ENCODE measurements at regions of chrX and their contacts with region 1.

Region 1: GRCh38 chrX:153953342-153953830 is 8.9 kb upstream of the RENBP start:
- DNase-seq: peak; percentile 95
- H3K4me3 ChIP-seq: no peak overlapping the region
- H3K27ac ChIP-seq: no peak overlapping the region
- H3K4me1 ChIP-seq: no peaks in the 10 kb centered on the region; a peak in 1 of 4 replicates
- H3K27me3 ChIP-seq: no peaks in the 10 kb centered on the region
- CTCF ChIP-seq: peak; percentile 97
- EP300 ChIP-seq: no peak
- RAD21 ChIP-seq: peak; percentile 88

Region 2: GRCh38 chrX:153941336-153942252 is 11.8 kb before region 1 on chrX:
- CTCF ChIA-PET with region 1: interaction called, 21 read pairs
- POLR2A ChIA-PET with region 1: no interaction called
- DNase-seq: no peak
- H3K4me3 ChIP-seq: no peak overlapping the region
- H3K27ac ChIP-seq: no peak overlapping the region
- H3K4me1 ChIP-seq: peaks cover 0 to 2% of the 10 kb centered on the region in 2 experiments; a peak in 1 of 4 replicates
- H3K27me3 ChIP-seq: peaks cover 2% of the 10 kb centered on the region; the same call in 1 of the 2 replicates
- CTCF ChIP-seq: no peak
- EP300 ChIP-seq: no peak
- RAD21 ChIP-seq: no peak